PC-9 (cell line): ENCODE measurements at regions of chr5 and their contacts with region 1.

Region 1: GRCh38 chr5:72210888-72211678 is 103.8 kb downstream of the MAP1B start:
- DNase-seq: peak; percentile 50 to 87
- H3K4me3 ChIP-seq: peak overlapping the region; percentile 2; the same call in 1 of the 2 replicates
- H3K27ac ChIP-seq: peak overlapping the region; percentile 83
- H3K4me1 ChIP-seq: peaks cover 37% of the 10 kb centered on the region
- H3K27me3 ChIP-seq: no peaks in the 10 kb centered on the region
- CTCF ChIP-seq: no peak

Region 2: GRCh38 chr5:71482132-71482531 is 729.0 kb before region 1 on chr5:
- CTCF ChIA-PET with region 1: no interaction called
- POLR2A ChIA-PET with region 1: no interaction called
- intact Hi-C with region 1: no loop called
- DNase-seq: peak; percentile 35 to 43
- H3K4me3 ChIP-seq: no peak overlapping the region
- H3K27ac ChIP-seq: peak overlapping the region; percentile 79
- H3K4me1 ChIP-seq: peaks cover 33% of the 10 kb centered on the region
- H3K27me3 ChIP-seq: no peaks in the 10 kb centered on the region
- CTCF ChIP-seq: no peak

Region 3: DNA sequence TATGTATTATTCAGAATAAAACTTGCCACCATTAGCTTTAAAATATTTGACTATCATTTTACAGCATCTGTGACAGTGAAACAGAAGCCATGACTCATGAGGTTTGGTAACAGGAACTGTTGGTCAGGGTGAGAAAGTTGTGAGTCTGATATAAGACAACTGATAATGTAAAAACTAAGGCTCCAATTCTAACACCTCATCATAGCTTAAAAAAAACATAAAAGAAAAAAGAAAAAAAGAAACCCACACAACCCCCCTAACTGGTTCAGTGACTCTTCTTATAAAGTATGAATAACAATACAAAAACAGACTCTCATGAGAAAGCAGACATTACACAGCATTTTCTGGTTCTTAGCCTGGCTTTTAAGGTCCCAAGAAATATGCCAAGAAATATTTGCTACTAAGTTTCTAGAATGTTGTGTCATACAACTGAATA is 23.2 kb after region 1 on chr5:
- CTCF ChIA-PET with region 1: interaction called, 4 read pairs
- POLR2A ChIA-PET with region 1: no interaction called
- intact Hi-C with region 1: loop called (anchors 1 kb)
- DNase-seq: peak; percentile 25 to 95
- H3K4me3 ChIP-seq: peak overlapping the region; percentile 25; the same call in 1 of the 2 replicates
- H3K27ac ChIP-seq: peak overlapping the region; percentile 99
- H3K4me1 ChIP-seq: peaks cover 52% of the 10 kb centered on the region
- H3K27me3 ChIP-seq: no peaks in the 10 kb centered on the region
- CTCF ChIP-seq: no peak